GM10248 (cell line): ENCODE measurements at regions of chr1 and their contacts with region 1.

Region 1: DNA sequence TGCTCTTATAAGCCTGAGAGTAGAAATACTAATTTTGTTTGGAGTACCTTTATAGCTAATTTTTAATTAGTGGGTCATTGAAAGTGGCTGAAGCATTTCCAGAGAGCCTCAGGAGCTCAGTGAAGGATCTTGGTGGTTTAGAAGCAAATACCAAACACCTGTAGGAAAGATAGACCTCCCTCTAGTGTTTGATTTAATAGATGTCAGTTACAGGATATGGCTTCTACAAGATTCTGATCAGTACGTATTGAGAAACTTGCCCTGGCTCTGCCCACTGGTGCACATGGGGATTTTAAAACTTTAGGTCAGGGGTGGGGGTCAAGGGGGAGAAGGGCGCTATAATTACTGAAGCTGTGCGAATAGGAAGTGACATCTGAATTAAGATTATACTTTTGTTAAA is 122.2 kb downstream of the POU2F1 start:
- DNase-seq: peak; percentile 33
- CTCF ChIP-seq: no peak

Region 2: DNA sequence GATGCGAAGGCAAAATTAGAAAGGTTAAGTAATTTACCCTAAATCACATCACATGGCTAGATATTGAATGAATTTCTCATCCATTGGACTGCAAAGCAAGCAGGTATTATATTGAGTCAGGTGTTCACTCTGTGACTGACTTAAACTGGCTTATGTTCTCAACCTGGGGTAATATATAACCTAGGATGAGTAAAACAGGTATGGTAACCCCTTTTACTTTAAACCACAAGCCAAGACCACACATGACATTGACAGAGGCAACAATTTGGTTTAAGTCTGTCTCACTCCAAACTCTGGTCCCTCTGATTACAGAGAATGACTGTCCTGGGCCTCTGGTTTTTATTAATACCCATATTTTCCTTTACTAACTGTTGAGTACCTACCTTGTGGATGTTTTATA is 320.5 kb before region 1 on chr1:
- CTCF ChIA-PET with region 1: no interaction called
- POLR2A ChIA-PET with region 1: no interaction called
- DNase-seq: no peak
- CTCF ChIP-seq: no peak

Region 3: DNA sequence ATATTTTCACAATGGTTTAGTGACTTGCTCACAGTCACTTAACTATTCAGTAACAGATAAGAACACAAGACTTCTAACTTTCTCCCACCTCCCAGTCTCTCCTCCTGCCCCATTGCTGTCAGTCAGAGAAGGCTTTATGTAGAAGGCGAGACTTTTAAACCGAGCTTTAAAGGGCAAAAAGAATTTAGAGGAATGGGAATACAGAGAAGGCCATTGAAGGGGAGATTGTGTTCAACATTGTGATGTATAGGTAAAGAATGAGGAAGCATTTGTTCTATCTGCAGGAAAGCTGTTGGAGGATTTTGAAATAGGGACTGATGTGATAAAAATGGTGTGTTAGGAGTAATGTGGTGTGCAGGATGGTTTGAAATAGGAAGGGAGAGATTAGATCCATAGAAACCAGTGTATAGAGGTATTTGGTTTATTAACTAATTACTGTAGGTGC is 114.9 kb before region 1 on chr1:
- CTCF ChIA-PET with region 1: no interaction called
- POLR2A ChIA-PET with region 1: no interaction called
- DNase-seq: no peak
- CTCF ChIP-seq: no peak

Region 4: DNA sequence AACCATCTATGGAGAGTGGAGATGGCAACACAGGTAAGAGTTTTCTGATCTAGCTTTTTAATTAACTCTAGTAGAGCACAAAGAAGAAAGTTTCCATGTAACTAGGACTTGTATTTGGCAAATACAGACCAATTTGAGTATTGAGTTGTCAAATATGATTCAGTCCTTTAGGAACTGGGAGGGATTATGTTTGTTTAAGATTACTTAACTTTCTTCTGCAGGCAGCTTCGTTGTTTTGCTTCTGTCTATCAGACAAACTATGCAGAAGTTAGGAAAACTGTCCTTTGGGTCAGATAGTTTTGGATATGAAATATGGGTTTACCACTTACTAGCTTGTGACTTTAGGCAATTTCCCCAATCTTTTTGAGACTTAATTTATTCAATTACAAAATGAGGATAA is 10.3 kb before region 1 on chr1:
- CTCF ChIA-PET with region 1: interaction called, 11 read pairs
- POLR2A ChIA-PET with region 1: no interaction called
- DNase-seq: no peak
- CTCF ChIP-seq: no peak

Region 5: GRCh38 chr1:167357305-167357704 is 14.5 kb after region 1 on chr1:
- CTCF ChIA-PET with region 1: interaction called, 16 read pairs
- POLR2A ChIA-PET with region 1: no interaction called
- DNase-seq: no peak
- CTCF ChIP-seq: no peak

Region 6: GRCh38 chr1:167373398-167373797 is 30.6 kb after region 1 on chr1:
- CTCF ChIA-PET with region 1: interaction called, 12 read pairs
- POLR2A ChIA-PET with region 1: no interaction called
- DNase-seq: no peak
- CTCF ChIP-seq: no peak